Gastrocnemius medialis (tissue), 4 donors: ENCODE measurements at regions of chrX and their contacts with region 1.

Region 1: GRCh38 chrX:37825209-37825842 is 22.0 kb downstream of the DYNLT3 start:
- DNase-seq: peak in 1 of 2 donors; percentile 12
- ATAC-seq: peak in 1 of 2 donors; percentile 61
- H3K4me3 ChIP-seq: no peak overlapping the region
- H3K27ac ChIP-seq: no peak overlapping the region
- H3K4me1 ChIP-seq: no peaks in the 10 kb centered on the region
- H3K27me3 ChIP-seq: no peaks in the 10 kb centered on the region
- CTCF ChIP-seq: peak; percentile 63 to 86 (median 75)
- POLR2A ChIP-seq: no peak

Region 2: GRCh38 chrX:37314536-37314935 is 510.8 kb before region 1 on chrX:
- in situ Hi-C with region 1: no loop called
- intact Hi-C with region 1: loop called (anchors 5 kb)
- DNase-seq: no peak
- ATAC-seq: no peak
- H3K4me3 ChIP-seq: no peak overlapping the region
- H3K27ac ChIP-seq: no peak overlapping the region
- H3K4me1 ChIP-seq: no peaks in the 10 kb centered on the region
- H3K27me3 ChIP-seq: no peaks in the 10 kb centered on the region
- CTCF ChIP-seq: no peak
- POLR2A ChIP-seq: no peak

Region 3: GRCh38 chrX:37509349-37509748 is 316.0 kb before region 1 on chrX:
- in situ Hi-C with region 1: no loop called
- intact Hi-C with region 1: loop called (anchors 5 kb)
- DNase-seq: no peak
- ATAC-seq: no peak
- H3K4me3 ChIP-seq: no peak overlapping the region
- H3K27ac ChIP-seq: no peak overlapping the region
- H3K4me1 ChIP-seq: no peaks in the 10 kb centered on the region
- H3K27me3 ChIP-seq: no peaks in the 10 kb centered on the region
- CTCF ChIP-seq: peak in 3 of 5 experiments; percentile 24 to 39 (median 27)
- POLR2A ChIP-seq: no peak

Region 4: GRCh38 chrX:37745354-37745753 is 80.0 kb before region 1 on chrX:
- in situ Hi-C with region 1: loop called in 1 of 4 experiments (anchors 10 kb)
- intact Hi-C with region 1: loop called (anchors 1 kb)
- DNase-seq: peak; percentile 5 to 34
- ATAC-seq: peak; percentile 60 to 68
- H3K4me3 ChIP-seq: no peak overlapping the region
- H3K27ac ChIP-seq: no peak overlapping the region
- H3K4me1 ChIP-seq: no peaks in the 10 kb centered on the region
- H3K27me3 ChIP-seq: no peaks in the 10 kb centered on the region
- CTCF ChIP-seq: peak; percentile 38 to 74 (median 52)
- POLR2A ChIP-seq: no peak

Region 5: DNA sequence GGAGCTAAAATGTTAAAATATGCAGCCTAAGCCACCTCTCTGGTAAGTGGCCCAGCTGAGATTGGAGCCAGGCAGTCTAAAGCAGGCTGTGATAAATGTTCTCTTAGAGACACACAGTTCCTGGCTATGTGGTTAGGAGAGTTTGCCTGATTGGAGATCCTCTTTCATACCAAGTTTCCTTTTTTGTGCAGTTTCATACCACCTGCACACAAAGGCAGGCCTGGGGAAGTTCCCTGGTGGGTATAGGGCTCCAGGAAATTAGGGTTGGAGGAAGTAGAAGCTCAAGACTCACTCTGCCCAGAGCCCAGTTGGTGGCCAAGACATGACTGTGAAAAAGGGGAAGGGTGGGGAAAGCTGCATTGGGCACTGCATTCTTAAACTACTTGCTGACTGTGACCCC is 28.5 kb before region 1 on chrX:
- in situ Hi-C with region 1: no loop called
- intact Hi-C with region 1: no loop called
- DNase-seq: peak in 1 of 2 donors; percentile 17
- ATAC-seq: no peak
- H3K4me3 ChIP-seq: no peak overlapping the region
- H3K27ac ChIP-seq: no peak overlapping the region
- H3K4me1 ChIP-seq: no peaks in the 10 kb centered on the region
- H3K27me3 ChIP-seq: no peaks in the 10 kb centered on the region
- CTCF ChIP-seq: no peak
- POLR2A ChIP-seq: no peak